Gastrocnemius medialis (tissue), 4 donors: ENCODE measurements at regions of chr10 and their contacts with region 1.

Region 1: DNA sequence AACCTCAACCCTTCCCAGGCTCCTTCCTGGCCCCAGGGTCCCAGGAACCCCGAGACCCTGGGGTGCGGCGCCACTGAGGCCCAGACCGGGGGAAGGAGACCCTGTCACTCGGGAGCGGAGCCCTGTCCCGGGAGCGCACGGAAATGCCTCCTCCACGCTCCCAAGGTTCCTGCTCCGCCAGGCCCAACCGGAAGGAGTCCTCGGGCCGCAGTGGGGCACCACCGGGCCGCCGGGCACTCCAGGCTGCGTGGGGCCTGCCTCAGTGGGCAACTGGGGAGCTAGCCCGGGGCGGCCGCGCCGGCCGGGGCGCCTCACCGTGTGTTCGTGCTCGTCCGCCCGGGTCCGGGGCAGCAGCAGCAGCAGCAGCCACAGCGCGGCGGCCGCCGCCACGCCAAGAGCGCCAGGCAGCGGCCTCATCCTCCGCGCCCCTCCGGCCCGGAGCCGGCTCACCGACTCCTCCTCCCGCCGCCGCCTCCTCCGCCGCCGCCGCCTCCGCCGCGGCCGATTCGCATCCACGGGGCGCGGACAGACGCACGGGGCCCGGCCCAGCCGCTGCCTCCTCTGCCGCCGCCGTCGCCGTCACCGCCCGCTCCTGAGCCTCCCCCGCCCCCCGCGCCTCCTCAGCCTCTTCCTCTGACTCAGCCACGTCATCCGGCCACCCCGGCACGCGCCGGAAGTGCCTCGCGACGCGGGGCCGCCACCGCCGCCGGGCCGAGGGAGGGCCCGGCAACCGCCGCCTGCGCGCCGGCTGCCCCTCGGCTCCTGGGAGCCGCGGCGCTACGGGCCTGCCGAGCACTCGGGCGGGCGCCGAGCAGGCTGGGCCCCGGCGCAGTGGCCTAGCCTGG is at the start of gene TM9SF3:
- DNase-seq: peak; percentile 90
- ATAC-seq: peak; percentile 89 to 92
- H3K4me3 ChIP-seq: peak within 1 kb of the TSS; percentile 78 to 95 (median 84)
- H3K27ac ChIP-seq: peak within 1 kb of the TSS; percentile 91 to 97 (median 95)
- H3K4me1 ChIP-seq: peaks cover 34 to 47% of the 10 kb centered on the region in 2 donors
- H3K27me3 ChIP-seq: no peaks in the 10 kb centered on the region
- CTCF ChIP-seq: peak in 2 of 5 experiments; percentile 19 to 25
- POLR2A ChIP-seq: peak; percentile 96 to 98
- total RNA-seq, gene TM9SF3: 27.5 to 32.4 (median 31.0) TPM

Region 2: DNA sequence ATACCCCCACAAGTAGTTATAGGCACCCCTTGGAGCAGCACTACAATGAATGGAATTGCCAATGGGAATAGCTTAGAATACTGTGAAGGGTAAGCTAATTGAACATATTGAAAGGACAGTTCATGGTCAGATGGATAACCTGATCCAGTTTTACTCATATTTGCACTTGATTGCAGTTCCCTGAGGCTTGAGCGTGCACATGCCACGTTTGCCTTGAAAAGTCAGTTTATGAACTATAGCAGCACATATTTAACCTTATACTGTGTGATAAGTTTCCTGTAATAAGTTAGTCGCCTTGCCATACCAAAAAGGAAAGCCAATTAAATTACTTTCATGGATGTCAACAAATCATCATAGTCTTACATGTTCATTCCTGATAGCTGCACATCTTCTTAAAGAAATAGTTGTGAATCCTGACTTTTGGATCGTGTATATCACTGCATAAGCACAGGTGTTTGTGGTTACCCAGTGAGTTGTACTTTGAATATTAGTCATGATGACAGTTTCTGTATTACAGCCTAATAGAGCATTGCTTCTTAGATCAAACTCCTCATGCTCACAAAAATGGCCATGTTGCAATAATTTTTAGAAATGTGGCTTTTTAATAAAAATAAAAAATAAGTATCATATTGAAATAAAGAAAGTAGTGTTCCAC is 260.8 kb before region 1 on chr10:
- in situ Hi-C with region 1: no loop called
- intact Hi-C with region 1: no loop called
- DNase-seq: no peak
- ATAC-seq: no peak
- H3K4me3 ChIP-seq: no peak overlapping the region
- H3K27ac ChIP-seq: no peak overlapping the region
- H3K4me1 ChIP-seq: no peaks in the 10 kb centered on the region
- H3K27me3 ChIP-seq: no peaks in the 10 kb centered on the region
- CTCF ChIP-seq: no peak
- POLR2A ChIP-seq: no peak

Region 3: DNA sequence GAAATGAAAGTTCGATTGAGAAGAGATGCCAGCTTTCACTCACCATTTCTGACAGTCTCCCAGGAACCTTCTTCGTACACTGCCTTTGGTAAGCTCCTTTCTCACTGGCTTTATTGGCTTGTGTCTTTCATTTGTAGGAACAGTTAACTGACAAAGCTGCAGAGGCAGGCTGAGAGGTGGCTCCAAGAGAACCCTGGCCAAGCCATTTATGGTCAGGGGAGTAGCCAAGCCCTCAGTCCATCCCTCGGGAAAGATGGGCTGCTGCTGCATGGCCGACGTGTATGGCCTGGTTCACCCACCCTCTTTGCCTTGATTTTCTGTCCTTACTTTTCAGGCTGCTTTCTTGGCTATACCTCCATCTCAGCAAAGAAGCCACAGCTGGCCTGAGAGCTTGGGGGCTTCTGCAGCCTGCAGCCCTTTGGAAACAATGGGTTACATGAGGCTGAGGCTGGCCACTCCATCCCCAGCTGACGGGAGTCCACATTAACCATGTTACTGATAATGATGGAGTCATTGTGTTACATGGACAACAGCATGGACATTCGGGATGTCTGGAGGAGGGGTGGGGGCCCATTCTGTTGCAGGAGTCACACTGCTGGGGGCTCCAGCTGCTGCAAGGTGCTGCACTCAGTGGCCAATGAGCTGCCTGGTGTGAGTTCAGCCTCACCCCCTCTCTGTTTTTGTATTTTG is 227.6 kb before region 1 on chr10 and contains the start of gene OPALIN:
- in situ Hi-C with region 1: no loop called
- intact Hi-C with region 1: no loop called
- DNase-seq: no peak
- ATAC-seq: no peak
- H3K4me3 ChIP-seq: no peak within 1 kb of the TSS
- H3K27ac ChIP-seq: no peak within 1 kb of the TSS
- H3K4me1 ChIP-seq: no peaks in the 10 kb centered on the region
- H3K27me3 ChIP-seq: peaks cover 0 to 5% (median 0%) of the 10 kb centered on the region in 3 donors
- CTCF ChIP-seq: no peak
- POLR2A ChIP-seq: no peak
- total RNA-seq, gene OPALIN: not detected

Region 4: DNA sequence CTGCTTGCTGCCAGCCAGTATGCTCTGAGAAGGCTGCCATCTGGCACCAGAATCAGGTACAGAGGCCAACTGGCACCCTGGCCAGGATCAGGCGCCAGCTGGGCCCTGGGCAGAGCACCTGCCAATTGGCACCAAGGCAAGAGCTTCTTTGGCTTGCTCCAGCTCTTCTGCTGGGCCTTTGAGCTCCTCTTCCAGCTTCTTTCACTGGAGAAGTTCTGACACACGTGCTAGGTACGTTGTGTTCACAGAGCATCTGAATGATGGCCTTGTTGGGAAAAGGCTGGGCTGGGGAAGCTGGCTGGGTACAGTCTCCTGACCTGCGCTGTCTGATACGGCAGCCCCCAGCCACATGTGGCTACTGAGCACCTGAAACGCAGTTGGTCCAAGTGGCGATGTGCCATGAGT is 196.2 kb before region 1 on chr10:
- in situ Hi-C with region 1: no loop called
- intact Hi-C with region 1: loop called (anchors 2 kb)
- DNase-seq: peak; percentile 77 to 92
- ATAC-seq: peak; percentile 98 to 100
- H3K4me3 ChIP-seq: no peak overlapping the region
- H3K27ac ChIP-seq: peak overlapping the region in 3 of 4 donors; percentile 42 to 64 (median 53)
- H3K4me1 ChIP-seq: peaks cover 8 to 16% of the 10 kb centered on the region in 2 donors
- H3K27me3 ChIP-seq: no peaks in the 10 kb centered on the region
- CTCF ChIP-seq: no peak
- POLR2A ChIP-seq: no peak

Region 5: DNA sequence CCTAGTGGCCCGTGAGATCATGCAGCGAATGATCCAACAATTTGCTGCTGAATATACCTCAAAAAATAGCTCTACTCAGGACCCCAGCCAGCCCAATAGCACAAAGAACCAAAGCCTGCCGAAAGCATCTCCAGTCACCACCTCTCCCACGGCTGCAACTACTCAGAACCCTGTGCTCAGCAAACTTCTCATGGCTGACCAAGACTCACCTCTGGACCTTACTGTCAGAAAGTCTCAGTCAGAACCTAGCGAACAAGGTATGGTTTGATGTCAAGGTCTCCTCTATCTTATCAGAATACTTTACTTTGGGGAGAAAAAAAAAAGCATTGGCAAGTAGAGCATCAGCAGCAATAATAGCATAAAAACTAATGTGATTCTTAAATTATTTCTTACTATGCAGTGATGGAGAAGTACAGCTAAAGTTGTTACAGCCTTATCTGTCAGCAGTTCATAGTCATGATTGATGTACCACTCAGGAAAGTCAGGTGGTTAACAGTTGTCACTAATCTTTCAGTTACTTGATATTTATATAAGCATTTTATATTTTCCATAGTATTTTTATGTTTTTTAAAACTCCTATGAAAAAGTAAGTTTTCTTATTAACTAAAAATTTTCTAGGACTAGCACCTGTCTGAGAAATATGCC is 362.5 kb after region 1 on chr10:
- in situ Hi-C with region 1: no loop called
- intact Hi-C with region 1: no loop called
- DNase-seq: no peak
- ATAC-seq: peak; percentile 41 to 60
- H3K4me3 ChIP-seq: no peak overlapping the region
- H3K27ac ChIP-seq: peak overlapping the region; percentile 2 to 74 (median 27)
- H3K4me1 ChIP-seq: peaks cover 37 to 46% of the 10 kb centered on the region in 2 donors
- H3K27me3 ChIP-seq: no peaks in the 10 kb centered on the region
- CTCF ChIP-seq: no peak
- POLR2A ChIP-seq: no peak